H1 (cell line): ENCODE measurements at regions of chr19 and their contacts with region 1.

Region 1: DNA sequence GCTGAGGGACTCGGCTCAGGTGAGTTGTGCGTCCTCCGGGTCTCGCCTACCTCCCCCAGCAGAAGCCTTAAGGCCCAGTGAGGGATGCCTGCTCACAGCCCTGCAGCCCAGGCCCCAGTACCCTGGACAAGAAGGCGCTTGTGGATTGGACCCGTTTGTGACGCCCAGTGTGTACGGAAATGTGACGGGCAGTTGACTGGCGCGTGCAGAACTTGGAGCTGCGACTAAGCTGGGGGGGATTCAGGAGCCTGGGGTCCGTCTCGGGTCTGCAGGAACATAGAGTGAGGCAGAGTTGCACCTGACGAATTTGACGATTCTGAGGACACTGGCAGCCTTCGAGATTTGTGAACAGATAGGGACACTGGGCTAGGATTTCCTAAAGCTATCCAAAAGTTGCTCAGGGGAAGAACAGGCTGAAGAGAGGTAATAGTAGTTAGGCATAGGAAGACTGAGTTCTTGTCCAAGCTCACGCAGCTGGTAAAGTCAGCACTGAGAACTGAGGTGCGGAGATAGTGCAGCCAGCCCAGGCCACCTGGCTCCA is 519 bp downstream of the ZNF551 start:
- DNase-seq: no peak
- H3K4me3 ChIP-seq: peak overlapping the region; percentile 91 to 99 (median 95)
- H3K27ac ChIP-seq: peak overlapping the region; percentile 61
- H3K4me1 ChIP-seq: peaks cover 0 to 2% (median 0%) of the 10 kb centered on the region in 4 experiments; a peak in 1 of 7 replicates
- H3K27me3 ChIP-seq: peaks cover 0 to 9% (median 0%) of the 10 kb centered on the region in 4 experiments; a peak in 4 of 7 replicates
- CTCF ChIP-seq: no peak
- EP300 ChIP-seq: no peak
- POLR2A ChIP-seq: no peak
- RAD21 ChIP-seq: no peak

Region 2: DNA sequence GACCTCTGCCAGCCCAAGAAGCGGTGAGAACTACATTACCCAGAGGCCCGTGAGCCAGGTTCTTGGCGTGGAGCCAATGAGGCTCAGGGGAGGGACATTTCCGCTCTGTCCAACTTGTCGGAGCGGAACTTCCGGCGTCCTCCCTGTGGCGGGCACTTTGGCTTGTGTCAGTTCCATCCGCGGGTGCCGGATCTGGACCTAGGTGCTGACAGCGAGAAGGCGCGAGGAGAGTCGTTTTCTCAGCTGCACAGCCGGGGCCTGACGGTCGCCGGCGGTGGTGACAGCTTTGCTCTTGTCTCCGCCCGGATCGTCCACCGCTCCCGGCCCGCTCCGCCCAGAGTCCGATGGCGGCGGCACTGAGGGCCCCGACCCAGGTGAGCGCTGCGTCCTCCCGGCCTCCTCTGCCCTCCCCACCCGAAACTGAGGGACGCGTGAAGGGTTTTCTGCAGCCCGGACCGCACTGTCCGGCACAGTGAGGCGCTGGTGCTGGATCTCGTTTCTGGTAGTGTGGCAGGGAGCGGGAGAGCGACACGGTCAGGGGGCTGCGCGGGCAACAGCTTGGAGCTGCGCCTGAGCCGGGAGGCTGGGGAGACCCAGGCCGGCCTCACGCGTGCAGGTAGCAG is 82.4 kb before region 1 on chr19 and contains the start of gene ZNF530:
- CTCF ChIA-PET with region 1: no interaction called
- POLR2A ChIA-PET with region 1: interaction called, 11 read pairs
- DNase-seq: peak; percentile 72 to 87
- H3K4me3 ChIP-seq: peak within 1 kb of the TSS; percentile 74 to 90 (median 82)
- H3K27ac ChIP-seq: no peak within 1 kb of the TSS
- H3K4me1 ChIP-seq: peaks cover 0 to 3% (median 2%) of the 10 kb centered on the region in 4 experiments; a peak in 3 of 7 replicates
- H3K27me3 ChIP-seq: no peaks in the 10 kb centered on the region
- CTCF ChIP-seq: no peak
- EP300 ChIP-seq: no peak
- POLR2A ChIP-seq: no peak
- RAD21 ChIP-seq: no peak; a peak in 1 of 4 replicates
- total RNA-seq, gene ZNF530: 6.3 and 9.3 TPM in 2 replicates

Region 3: DNA sequence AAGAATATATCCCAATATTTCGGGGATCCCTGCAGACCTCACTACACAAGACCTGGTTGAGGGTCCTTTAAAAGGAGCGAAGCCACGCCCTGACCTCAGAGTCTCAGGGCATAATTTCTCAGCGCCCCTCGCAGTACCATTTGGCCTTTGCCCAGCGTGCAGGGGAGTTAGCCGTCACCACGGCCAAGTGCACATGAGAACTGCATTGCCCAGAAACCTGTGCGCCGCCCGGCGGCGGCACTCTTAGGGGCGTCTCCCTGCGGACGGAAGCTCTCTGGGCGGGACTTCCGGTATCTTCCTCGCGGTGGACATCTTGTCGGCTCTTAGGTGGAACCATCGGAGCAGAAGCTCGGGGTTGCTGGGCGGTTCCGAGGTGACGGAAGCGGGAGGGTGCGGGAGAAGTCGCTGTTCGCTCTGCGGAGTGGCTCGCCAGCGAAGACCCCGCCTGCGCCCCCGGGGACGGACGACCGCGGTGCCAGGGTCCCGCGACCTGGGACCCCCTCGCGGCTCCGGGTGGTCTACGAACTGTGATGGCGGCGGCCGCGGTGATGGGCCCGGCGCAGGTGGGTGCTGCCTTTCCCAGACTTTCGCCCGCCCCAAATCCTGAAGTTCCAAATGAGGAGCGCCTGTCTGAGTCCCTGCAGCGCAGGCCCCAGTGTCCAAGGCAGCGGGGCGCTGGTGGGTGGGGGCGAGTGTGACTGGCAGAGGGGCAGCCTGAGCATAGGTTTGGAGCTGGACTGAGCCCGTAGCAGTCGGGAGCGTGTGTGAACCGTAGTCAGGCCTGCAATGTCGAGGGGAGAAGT is 68.2 kb before region 1 on chr19 and contains the start of gene ZNF134:
- CTCF ChIA-PET with region 1: no interaction called
- POLR2A ChIA-PET with region 1: interaction called, 11 read pairs
- DNase-seq: peak; percentile 66 to 90
- H3K4me3 ChIP-seq: peak within 1 kb of the TSS; percentile 94 to 98 (median 96)
- H3K27ac ChIP-seq: peak within 1 kb of the TSS; percentile 89
- H3K4me1 ChIP-seq: peaks cover 0 to 3% (median 0%) of the 10 kb centered on the region in 4 experiments; a peak in 3 of 7 replicates
- H3K27me3 ChIP-seq: peaks cover 0 to 1% (median 0%) of the 10 kb centered on the region in 4 experiments; a peak in 1 of 7 replicates
- CTCF ChIP-seq: no peak
- EP300 ChIP-seq: no peak
- POLR2A ChIP-seq: peak; percentile 67 to 88
- RAD21 ChIP-seq: 0 out of 4 replicates have a peak, but pooled peaks of 1 of the 2 experiments have one; percentile 2
- total RNA-seq, gene ZNF134: 54.6 and 55.1 TPM in 2 replicates

Region 4: GRCh38 chr19:57632987-57633831 is 49.1 kb before region 1 on chr19 and contains the start of gene ZNF211:
- CTCF ChIA-PET with region 1: interaction called, 3 read pairs
- POLR2A ChIA-PET with region 1: interaction called, 11 read pairs
- DNase-seq: peak; percentile 84 to 93
- H3K4me3 ChIP-seq: peak within 1 kb of the TSS; percentile 85 to 93 (median 90)
- H3K27ac ChIP-seq: no peak within 1 kb of the TSS
- H3K4me1 ChIP-seq: peaks cover 0 to 3% (median 1%) of the 10 kb centered on the region in 4 experiments; a peak in 3 of 7 replicates
- H3K27me3 ChIP-seq: no peaks in the 10 kb centered on the region
- CTCF ChIP-seq: no peak
- EP300 ChIP-seq: no peak
- POLR2A ChIP-seq: peak in 1 of 2 experiments; percentile 39; a peak in 1 of 3 replicates
- RAD21 ChIP-seq: no peak; a peak in 1 of 4 replicates
- total RNA-seq, gene ZNF211: 15.0 and 15.7 TPM in 2 replicates

Region 5: GRCh38 chr19:57664269-57665127 is 17.8 kb before region 1 on chr19:
- CTCF ChIA-PET with region 1: interaction called, 9 read pairs
- POLR2A ChIA-PET with region 1: interaction called, 26 read pairs
- DNase-seq: peak in 1 of 2 experiments; percentile 83
- H3K4me3 ChIP-seq: peak overlapping the region; percentile 40 to 72 (median 56)
- H3K27ac ChIP-seq: no peak overlapping the region
- H3K4me1 ChIP-seq: peaks cover 2 to 5% (median 4%) of the 10 kb centered on the region in 4 experiments
- H3K27me3 ChIP-seq: no peaks in the 10 kb centered on the region; a peak in 4 of 7 replicates
- CTCF ChIP-seq: no peak
- EP300 ChIP-seq: no peak
- POLR2A ChIP-seq: peak; percentile 63 to 81
- RAD21 ChIP-seq: no peak

Region 6: GRCh38 chr19:57671114-57671878 is 11.0 kb before region 1 on chr19:
- CTCF ChIA-PET with region 1: interaction called, 8 read pairs
- POLR2A ChIA-PET with region 1: interaction called, 11 read pairs
- DNase-seq: no peak
- H3K4me3 ChIP-seq: no peak overlapping the region
- H3K27ac ChIP-seq: no peak overlapping the region
- H3K4me1 ChIP-seq: peaks cover 0 to 3% (median 0%) of the 10 kb centered on the region in 4 experiments; a peak in 1 of 7 replicates
- H3K27me3 ChIP-seq: peaks cover 0 to 4% (median 0%) of the 10 kb centered on the region in 4 experiments; a peak in 2 of 7 replicates
- CTCF ChIP-seq: no peak
- EP300 ChIP-seq: no peak
- POLR2A ChIP-seq: no peak
- RAD21 ChIP-seq: no peak

Region 7: GRCh38 chr19:57708641-57709361 is 26.5 kb after region 1 on chr19 and contains the start of gene ZNF154:
- CTCF ChIA-PET with region 1: interaction called, 3 read pairs
- POLR2A ChIA-PET with region 1: interaction called, 41 read pairs
- DNase-seq: peak; percentile 65 to 81
- H3K4me3 ChIP-seq: peak within 1 kb of the TSS; percentile 91 to 97 (median 94)
- H3K27ac ChIP-seq: peak within 1 kb of the TSS; percentile 95
- H3K4me1 ChIP-seq: peaks cover 0 to 9% (median 4%) of the 10 kb centered on the region in 4 experiments; a peak in 5 of 7 replicates
- H3K27me3 ChIP-seq: no peaks in the 10 kb centered on the region
- CTCF ChIP-seq: no peak
- EP300 ChIP-seq: no peak
- POLR2A ChIP-seq: peak; percentile 53 to 92
- RAD21 ChIP-seq: no peak
- total RNA-seq, gene ZNF154: 9.5 and 11.6 TPM in 2 replicates

Region 8: GRCh38 chr19:57747472-57747807 is 65.1 kb after region 1 on chr19:
- CTCF ChIA-PET with region 1: no interaction called
- POLR2A ChIA-PET with region 1: no interaction called
- DNase-seq: no peak
- H3K4me3 ChIP-seq: peak overlapping the region; percentile 94 to 99 (median 98)
- H3K27ac ChIP-seq: no peak overlapping the region
- H3K4me1 ChIP-seq: peaks cover 0 to 10% (median 5%) of the 10 kb centered on the region in 4 experiments; a peak in 5 of 7 replicates
- H3K27me3 ChIP-seq: no peaks in the 10 kb centered on the region
- CTCF ChIP-seq: no peak
- EP300 ChIP-seq: no peak
- POLR2A ChIP-seq: no peak
- RAD21 ChIP-seq: no peak

Region 9: DNA sequence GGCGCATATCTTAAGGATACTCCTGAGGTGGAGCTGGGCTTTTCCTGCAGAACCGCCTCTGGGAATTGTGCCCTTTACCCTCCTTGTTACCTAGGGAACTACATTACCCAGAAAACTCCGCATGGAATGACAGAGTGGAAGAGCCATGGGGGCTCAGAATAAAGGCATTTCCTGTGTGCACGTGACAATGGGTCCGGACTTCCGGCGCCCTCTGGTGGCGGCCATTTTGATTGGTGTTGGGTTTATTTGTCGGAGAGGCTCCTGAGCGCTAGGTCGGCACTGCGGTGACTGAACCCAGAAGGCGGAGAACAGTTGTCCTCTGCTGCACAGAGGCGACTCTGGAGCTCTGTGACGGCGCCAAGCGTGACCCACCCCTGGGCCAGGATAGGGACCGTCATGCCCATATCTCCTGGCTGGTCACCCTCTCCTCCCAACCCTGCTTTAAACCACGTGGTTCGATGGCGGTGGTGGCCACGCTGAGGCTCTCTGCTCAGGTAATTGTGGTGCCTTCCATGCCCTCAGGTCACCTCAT is 147.8 kb after region 1 on chr19 and contains the start of gene ZNF587B:
- CTCF ChIA-PET with region 1: no interaction called
- POLR2A ChIA-PET with region 1: no interaction called
- DNase-seq: peak; percentile 77 to 92
- H3K4me3 ChIP-seq: peak within 1 kb of the TSS; percentile 73 to 99 (median 94)
- H3K27ac ChIP-seq: peak within 1 kb of the TSS; percentile 96
- H3K4me1 ChIP-seq: peaks cover 0 to 8% (median 5%) of the 10 kb centered on the region in 4 experiments; a peak in 4 of 7 replicates
- H3K27me3 ChIP-seq: no peaks in the 10 kb centered on the region
- CTCF ChIP-seq: peak in 2 of 3 experiments; percentile 8 to 16; a peak in 2 of 4 replicates
- EP300 ChIP-seq: no peak
- POLR2A ChIP-seq: peak; percentile 68 to 95
- RAD21 ChIP-seq: peak in 1 of 2 experiments; percentile 19; a peak in 2 of 4 replicates
- total RNA-seq, gene ZNF587B: 53.7 and 60.1 TPM in 2 replicates